ENCODE measurements at regions of chr2 and their contacts with region 1.

Region 1: GRCh38 chr2:30447149-30448045 is at the start of gene LCLAT1:
- DNase-seq: peak; percentile 84
- H3K4me3 Mint-ChIP-seq: peak within 1 kb of the TSS; percentile 96
- H3K27ac Mint-ChIP-seq: peak within 1 kb of the TSS; percentile 98
- H3K4me1 Mint-ChIP-seq: peaks cover 42% of the 10 kb centered on the region
- H3K27me3 Mint-ChIP-seq: no peaks in the 10 kb centered on the region
- total RNA-seq, gene LCLAT1: 40.1 and 46.2 TPM in 2 replicates

Region 2: GRCh38 chr2:30231212-30231995 is 216.0 kb before region 1 on chr2 and contains the start of gene LBH:
- intact Hi-C with region 1: loop called (anchors 1 kb)
- DNase-seq: peak; percentile 74
- H3K4me3 Mint-ChIP-seq: peak within 1 kb of the TSS; percentile 98
- H3K27ac Mint-ChIP-seq: peak within 1 kb of the TSS; percentile 99
- H3K4me1 Mint-ChIP-seq: peaks cover 72% of the 10 kb centered on the region
- H3K27me3 Mint-ChIP-seq: peaks cover 7% of the 10 kb centered on the region
- total RNA-seq, gene LBH: 306 and 313 TPM in 2 replicates

Region 3: DNA sequence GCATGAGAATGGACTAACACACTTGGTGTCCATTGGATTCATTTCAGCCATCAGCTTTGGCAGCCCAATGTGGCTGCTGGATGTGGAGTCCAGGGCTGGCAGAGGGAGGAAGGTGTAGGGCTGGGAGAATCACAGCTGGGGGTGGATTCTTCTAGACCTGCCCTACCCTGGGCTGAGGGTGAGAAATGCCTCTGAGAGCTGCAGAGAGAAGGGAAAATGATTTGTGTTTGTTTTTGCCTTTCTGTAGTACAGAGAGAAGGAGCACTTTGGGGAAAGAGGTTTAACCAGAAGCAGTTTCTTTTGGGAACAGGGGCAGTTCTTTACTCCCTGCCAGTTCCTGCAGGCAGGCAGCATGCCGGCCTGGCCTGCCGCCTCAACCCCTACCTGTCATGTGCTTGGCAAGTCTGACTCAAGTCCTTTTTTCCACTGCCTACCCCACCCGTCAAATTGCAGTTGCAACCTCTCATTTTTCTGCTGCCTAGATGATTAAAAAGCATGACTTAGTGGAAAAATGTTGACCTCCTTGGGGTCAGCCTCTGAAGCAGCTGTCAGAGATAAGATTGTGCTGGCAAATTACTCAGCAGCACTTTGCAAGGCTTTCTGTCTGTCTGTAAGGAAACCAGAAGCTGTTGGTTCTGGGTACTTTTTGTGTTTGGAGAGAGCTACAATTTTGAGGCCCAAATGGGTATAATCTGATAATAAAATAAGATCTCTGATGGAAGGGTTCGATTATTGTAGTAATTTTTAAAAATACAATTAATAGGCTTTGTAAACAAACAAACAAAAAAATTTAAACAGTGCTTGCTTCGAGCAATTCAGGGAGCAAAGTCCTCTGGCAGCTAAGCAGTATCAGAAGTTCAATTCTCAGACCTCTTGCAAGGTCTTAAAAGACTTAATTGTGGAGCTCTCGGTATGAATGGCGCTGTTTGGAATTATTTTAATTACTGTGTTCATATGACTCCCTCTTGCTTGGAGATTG is 194.4 kb before region 1 on chr2:
- intact Hi-C with region 1: loop called (anchors 2 kb)
- DNase-seq: peak; percentile 48
- H3K4me3 Mint-ChIP-seq: peak overlapping the region; percentile 53
- H3K27ac Mint-ChIP-seq: peak overlapping the region; percentile 93
- H3K4me1 Mint-ChIP-seq: peaks cover 92% of the 10 kb centered on the region
- H3K27me3 Mint-ChIP-seq: no peaks in the 10 kb centered on the region

Region 4: DNA sequence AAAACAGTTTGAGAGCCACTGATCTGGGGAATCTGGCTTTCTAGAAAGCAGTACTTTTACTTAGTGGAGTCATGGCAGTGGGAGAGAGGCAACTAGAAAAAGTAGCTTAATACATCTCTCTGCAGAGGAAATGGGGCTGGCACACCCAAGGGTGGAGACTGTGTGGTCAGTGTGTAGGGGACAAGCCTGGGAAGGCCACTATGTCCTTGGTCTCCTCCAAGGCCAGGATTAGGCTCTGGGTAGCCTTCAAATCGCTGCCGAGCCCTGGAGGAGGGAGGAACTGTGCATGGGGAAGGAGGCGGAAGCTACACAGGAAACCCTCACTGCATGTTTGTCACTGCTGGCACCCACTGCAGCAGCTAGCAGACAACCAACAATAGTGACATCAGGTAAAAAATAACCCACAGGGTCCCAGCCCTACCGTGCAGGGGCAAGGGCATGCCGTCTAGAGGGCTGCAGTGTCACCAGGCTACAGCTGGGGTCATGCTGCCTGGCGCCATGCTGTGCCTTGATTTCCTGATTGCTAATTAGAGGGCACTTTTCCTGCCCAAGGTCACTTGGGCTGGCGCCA is 181.3 kb before region 1 on chr2:
- intact Hi-C with region 1: loop called (anchors 1 kb)
- DNase-seq: peak; percentile 51
- H3K4me3 Mint-ChIP-seq: peak overlapping the region; percentile 84
- H3K27ac Mint-ChIP-seq: peak overlapping the region; percentile 97
- H3K4me1 Mint-ChIP-seq: peaks cover 82% of the 10 kb centered on the region
- H3K27me3 Mint-ChIP-seq: no peaks in the 10 kb centered on the region

Region 5: DNA sequence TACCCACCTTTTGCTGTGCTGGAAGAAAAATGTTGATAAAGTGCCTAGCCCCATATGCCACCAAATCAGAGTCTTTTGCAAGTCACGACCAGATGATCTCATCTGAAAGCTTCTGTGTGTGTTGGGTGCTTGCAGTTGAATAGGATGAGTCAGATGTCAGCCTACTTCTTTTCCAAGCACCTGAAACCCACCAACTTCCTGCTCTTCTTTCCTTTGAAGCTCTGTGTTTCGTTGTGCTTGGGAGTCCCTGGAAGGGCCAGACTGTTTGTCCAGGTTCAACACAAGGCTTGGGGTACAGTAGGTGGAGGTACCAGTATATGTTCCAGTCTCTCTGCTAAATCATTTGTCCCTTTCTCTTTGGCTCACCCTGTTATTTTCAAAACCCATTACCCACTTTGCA is 37.2 kb before region 1 on chr2:
- intact Hi-C with region 1: loop called (anchors 5 kb)
- DNase-seq: no peak
- H3K4me3 Mint-ChIP-seq: peak overlapping the region; percentile 45
- H3K27ac Mint-ChIP-seq: peak overlapping the region; percentile 93
- H3K4me1 Mint-ChIP-seq: peaks cover 51% of the 10 kb centered on the region
- H3K27me3 Mint-ChIP-seq: no peaks in the 10 kb centered on the region

Region 6: GRCh38 chr2:30428827-30429461 is 18.5 kb before region 1 on chr2:
- intact Hi-C with region 1: loop called (anchors 1 kb)
- DNase-seq: no peak
- H3K4me3 Mint-ChIP-seq: no peak overlapping the region
- H3K27ac Mint-ChIP-seq: peak overlapping the region; percentile 74
- H3K4me1 Mint-ChIP-seq: peaks cover 27% of the 10 kb centered on the region
- H3K27me3 Mint-ChIP-seq: peaks cover 3% of the 10 kb centered on the region

Region 7: DNA sequence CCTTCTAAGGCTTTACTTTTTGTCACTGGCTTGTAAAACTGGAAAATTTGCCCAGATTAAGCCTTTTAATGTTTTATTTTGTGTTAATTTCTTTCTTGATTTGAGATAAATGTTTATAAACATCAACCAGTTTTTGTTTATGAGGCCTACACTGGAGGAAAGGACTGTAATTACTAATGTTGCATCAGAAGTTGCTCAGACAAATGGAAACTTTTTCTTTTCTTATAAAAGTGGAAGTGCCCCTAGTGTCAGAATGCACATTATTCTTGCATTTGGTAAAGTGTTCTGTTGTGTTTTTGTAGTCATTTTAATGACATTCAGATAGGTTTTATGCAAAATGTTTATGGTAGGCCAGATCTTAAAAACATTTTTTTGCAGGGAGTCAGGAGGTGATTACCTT is 24.9 kb after region 1 on chr2:
- intact Hi-C with region 1: loop called (anchors 2 kb)
- DNase-seq: no peak
- H3K4me3 Mint-ChIP-seq: no peak overlapping the region
- H3K27ac Mint-ChIP-seq: peak overlapping the region; percentile 5
- H3K4me1 Mint-ChIP-seq: peaks cover 23% of the 10 kb centered on the region
- H3K27me3 Mint-ChIP-seq: no peaks in the 10 kb centered on the region

Measured in activated T-helper 1 cell treated with anti-CD3 and anti-CD28 coated beads, Interleukin-12 subunit alpha, Interleukin-12 subunit beta, Interleukin-2, Interleukin-4 antibody, amounts not matched to agents 30 ng/mL and 10 ng/mL and 1 ng/mL, durations not matched to agents 14 hours and 24 hours and 36 hours (primary cell).